ENCODE measurements at regions of chr1 and their contacts with region 1.

Region 1: DNA sequence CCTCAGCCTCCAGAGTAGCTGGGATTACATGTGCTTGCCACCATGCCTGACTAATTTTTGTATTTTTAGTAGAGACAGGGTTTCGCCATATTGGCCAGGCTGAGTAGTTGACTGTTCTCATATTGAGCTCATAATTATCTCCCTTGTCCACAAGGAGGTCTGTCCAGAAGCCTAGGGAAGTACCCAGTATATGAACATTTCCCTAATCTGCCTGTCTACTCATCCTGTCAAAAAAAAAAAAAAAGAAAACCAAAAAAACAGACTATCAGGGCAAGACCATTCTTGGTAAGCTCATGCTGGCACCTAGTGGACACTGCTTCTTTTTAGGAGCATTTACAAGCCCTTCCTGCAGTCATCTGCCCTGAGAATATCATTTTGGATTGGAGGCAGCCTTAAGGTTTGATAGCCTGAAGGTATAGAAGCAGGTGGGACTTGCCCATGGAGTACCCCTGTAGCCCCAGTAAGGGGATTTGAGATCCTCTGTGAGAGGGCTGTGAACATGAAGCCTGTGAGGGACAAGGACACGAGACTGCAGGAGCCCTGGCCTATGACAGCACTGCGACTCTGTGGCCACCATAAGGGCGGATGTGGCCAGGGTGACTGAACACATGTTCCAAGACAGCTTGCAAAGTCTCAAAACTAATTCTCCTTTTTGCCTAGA is 10.8 kb upstream of the DUSP12 start:
- DNase-seq: peak; percentile 45
- H3K4me3 ChIP-seq: no peak overlapping the region
- CTCF ChIP-seq: peak; percentile 61

Region 2: DNA sequence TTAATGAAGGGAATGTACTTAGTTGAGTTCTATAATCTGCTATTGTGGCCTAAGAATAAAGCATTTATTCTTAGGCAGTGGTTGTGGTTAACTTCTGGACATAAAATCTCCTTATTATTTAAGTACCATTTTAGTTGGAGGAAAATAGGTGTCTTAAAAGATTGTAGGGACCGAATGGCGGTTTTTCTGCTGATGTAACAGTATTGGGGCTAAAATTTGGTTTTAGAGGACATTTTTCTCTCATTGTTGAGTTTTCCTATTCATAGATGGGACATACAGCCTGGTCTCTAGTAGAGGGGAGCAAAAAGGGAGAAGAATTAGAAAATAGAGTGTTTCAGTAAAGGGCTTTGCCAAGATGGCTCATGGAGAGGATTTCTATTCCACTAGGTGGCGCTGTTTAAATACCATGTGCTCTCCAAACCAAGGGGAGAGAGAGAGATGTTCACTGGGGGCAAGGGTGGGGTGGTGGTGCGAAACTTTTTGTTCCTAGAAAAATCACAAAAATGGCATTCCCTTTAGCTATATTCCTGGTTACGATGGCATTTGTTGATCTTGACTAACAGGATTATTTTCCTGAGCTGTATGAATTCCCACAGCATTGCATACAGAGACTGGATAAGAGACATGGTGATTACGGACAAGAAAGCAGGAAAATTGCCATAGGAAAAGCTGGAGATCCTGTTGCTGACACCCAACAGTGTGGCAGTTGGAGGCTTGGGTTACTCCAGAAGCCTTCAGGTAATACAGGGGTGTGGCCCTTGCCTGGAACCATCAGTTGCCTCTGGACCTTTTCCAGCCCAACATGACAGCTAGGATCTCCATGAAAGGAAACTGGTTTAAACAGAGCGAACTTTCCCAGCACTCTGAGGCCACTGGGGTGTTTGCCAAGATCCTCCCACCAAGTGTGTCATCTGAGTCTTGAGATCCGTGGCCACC is 251.7 kb before region 1 on chr1:
- CTCF ChIA-PET with region 1: interaction called, 144 read pairs
- POLR2A ChIA-PET with region 1: no interaction called
- DNase-seq: no peak
- H3K4me3 ChIP-seq: no peak overlapping the region
- CTCF ChIP-seq: peak; percentile 44

Region 3: GRCh38 chr1:161531986-161532643 is 206.6 kb before region 1 on chr1:
- CTCF ChIA-PET with region 1: interaction called, 10 read pairs
- POLR2A ChIA-PET with region 1: no interaction called
- DNase-seq: no peak
- H3K4me3 ChIP-seq: peak overlapping the region; percentile 16
- CTCF ChIP-seq: no peak

Region 4: GRCh38 chr1:161718559-161719324 is 20.0 kb before region 1 on chr1:
- CTCF ChIA-PET with region 1: interaction called, 10 read pairs
- POLR2A ChIA-PET with region 1: no interaction called
- DNase-seq: no peak
- H3K4me3 ChIP-seq: no peak overlapping the region
- CTCF ChIP-seq: no peak

Region 5: DNA sequence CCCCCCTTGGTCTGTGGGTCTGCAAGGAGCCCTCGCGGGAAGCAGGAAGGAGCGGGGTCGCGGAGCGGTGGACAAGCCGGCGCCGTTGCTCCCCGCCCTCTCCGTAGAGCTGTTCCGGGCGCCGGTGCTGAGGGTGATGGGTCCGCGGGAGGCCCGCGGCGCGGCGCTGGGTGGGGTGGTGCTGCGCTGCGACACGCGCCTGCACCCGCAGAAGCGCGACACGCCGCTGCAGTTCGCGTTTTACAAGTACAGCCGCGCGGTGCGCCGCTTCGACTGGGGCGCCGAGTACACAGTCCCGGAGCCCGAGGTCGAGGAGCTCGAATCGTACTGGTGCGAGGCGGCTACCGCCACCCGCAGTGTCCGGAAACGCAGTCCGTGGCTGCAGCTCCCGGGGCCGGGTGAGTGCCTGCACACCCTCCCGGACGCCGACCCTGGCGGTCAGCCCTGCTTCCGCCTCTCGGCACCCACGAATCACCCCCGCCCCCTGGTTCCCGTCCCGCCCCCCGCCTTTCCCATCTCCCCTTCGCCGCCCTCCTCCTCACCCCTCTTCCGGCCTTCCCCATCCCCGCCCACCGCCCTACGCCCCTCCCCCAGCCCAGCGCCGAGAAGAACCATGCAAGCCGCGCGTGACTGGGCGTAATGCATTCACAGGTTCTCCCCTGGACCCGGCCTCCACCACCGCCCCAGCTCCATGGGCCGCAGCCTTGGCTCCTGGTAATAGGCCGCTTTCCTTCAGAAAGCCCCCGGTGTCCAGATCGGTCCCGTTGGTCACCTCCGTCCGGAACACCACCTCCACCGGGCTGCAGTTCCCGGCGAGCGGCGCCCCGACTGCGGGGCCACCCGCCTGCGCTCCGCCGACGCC is 11.9 kb before region 1 on chr1:
- CTCF ChIA-PET with region 1: interaction called, 28 read pairs
- POLR2A ChIA-PET with region 1: interaction called, 5 read pairs
- DNase-seq: no peak
- H3K4me3 ChIP-seq: peak overlapping the region; percentile 75
- CTCF ChIP-seq: no peak

Region 6: DNA sequence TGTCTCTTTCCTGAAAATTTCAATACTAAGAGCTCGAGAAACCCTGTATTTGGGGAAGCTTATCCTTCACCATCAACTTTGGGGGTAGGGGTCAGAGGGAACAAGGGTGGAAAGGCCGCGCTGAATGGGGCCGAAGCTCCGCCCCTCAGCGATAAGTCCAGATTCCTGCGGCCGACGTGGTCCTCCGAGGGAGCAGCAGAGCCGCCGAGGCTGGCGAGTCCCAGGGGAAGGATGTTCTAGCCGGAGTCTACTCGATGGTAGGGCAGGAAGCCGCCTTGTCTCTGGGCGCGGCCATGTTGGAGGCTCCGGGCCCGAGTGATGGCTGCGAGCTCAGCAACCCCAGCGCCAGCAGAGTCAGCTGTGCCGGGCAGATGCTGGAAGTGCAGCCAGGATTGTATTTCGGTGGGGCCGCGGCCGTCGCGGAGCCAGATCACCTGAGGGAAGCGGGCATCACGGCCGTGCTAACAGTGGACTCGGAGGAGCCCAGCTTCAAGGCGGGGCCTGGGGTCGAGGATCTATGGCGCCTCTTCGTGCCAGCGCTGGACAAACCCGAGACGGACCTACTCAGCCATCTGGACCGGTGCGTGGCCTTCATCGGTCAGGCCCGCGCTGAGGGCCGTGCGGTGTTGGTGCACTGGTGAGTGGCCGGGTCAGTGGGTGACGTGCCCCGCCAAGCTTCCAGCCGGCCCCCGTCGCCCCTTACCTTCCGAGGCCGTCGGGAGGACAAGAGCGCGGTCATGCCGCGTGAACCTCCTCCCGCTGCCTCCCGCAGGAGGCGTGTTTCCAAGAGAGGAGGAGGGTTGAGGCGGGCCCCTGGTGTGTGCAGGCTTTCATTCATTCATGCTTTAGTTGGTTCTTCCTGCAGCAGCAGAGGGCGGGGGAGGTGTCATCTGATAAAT is 11.0 kb after region 1 on chr1 and contains the start of gene DUSP12:
- CTCF ChIA-PET with region 1: interaction called, 77 read pairs
- POLR2A ChIA-PET with region 1: interaction called, 3 read pairs
- DNase-seq: peak; percentile 72
- H3K4me3 ChIP-seq: peak within 1 kb of the TSS; percentile 97
- CTCF ChIP-seq: peak; percentile 47